ENCODE measurements at regions of chr22 and their contacts with region 1.

Region 1: GRCh38 chr22:40055143-40055883 is 60.6 kb downstream of the FAM83F start:
- DNase-seq: no peak
- ATAC-seq: no peak
- H3K4me3 ChIP-seq: no peak overlapping the region
- H3K27ac ChIP-seq: peak overlapping the region in 1 of 12 donors; percentile 44
- H3K4me1 ChIP-seq: peaks cover 5 to 58% (median 27%) of the 10 kb centered on the region in 12 donors
- H3K27me3 ChIP-seq: no peaks in the 10 kb centered on the region
- CTCF ChIP-seq: no peak
- POLR2A ChIP-seq: no peak

Region 2: DNA sequence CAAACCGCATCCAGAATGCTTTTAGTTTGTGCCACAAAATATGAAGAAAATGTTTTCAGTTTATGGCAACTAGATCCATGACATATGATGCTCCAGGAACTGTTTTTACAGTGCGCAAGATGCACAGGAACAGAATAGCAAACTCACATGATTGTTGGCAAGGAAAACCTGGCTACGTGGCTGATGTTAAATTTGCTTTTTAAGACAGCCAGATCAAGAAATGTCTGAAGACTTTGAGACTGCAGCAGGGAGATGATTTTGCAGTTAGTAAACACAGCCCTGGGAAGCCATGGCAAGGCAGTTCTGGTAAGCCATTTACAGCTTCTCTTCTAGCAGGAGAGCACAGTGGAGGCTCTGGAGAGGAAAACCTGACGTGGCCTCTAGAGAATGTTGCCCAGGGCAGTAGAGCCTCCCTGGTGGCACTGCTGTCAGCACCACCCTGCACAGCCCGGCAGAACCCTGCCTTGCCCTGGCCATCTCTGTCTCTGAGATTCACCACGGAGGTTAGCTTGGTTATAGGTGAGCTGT is 52.6 kb after region 1 on chr22:
- intact Hi-C with region 1: loop called in 2 of 10 experiments (anchors 5 to 10 kb)
- DNase-seq: peak in 4 of 5 donors; percentile 16 to 58 (median 31)
- ATAC-seq: peak; percentile 47 to 93 (median 82)
- H3K4me3 ChIP-seq: peak overlapping the region in 10 of 12 donors; percentile 2 to 54 (median 34)
- H3K27ac ChIP-seq: peak overlapping the region in 8 of 12 donors; percentile 4 to 66 (median 52)
- H3K4me1 ChIP-seq: peaks cover 0 to 44% (median 24%) of the 10 kb centered on the region in 12 donors
- H3K27me3 ChIP-seq: no peaks in the 10 kb centered on the region
- CTCF ChIP-seq: no peak
- POLR2A ChIP-seq: no peak

Region 3: DNA sequence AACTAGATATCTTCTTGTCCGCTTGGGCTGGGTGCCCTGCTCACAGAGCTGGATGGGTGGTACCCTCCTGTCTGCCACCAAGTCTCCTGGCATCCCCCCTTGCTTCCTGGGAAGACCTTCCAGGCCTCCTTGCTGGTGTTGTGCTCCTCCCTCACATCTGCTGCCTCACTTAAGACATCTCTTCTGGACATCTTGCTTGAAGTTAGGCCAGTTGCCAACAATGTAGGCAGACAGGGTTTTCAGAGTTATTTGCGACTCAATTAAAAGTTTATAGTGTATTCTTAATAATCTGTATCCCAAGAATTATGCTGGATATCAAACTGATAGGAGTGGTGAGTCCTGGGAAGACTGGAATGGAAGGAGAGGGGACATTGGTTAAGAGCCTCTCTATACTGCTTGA is 58.4 kb after region 1 on chr22:
- intact Hi-C with region 1: loop called in 3 of 10 experiments (anchors 5 to 10 kb)
- DNase-seq: no peak
- ATAC-seq: peak in 1 of 4 donors; percentile 27
- H3K4me3 ChIP-seq: no peak overlapping the region
- H3K27ac ChIP-seq: no peak overlapping the region
- H3K4me1 ChIP-seq: peaks cover 0 to 50% (median 24%) of the 10 kb centered on the region in 12 donors
- H3K27me3 ChIP-seq: no peaks in the 10 kb centered on the region
- CTCF ChIP-seq: no peak
- POLR2A ChIP-seq: no peak

Region 4: DNA sequence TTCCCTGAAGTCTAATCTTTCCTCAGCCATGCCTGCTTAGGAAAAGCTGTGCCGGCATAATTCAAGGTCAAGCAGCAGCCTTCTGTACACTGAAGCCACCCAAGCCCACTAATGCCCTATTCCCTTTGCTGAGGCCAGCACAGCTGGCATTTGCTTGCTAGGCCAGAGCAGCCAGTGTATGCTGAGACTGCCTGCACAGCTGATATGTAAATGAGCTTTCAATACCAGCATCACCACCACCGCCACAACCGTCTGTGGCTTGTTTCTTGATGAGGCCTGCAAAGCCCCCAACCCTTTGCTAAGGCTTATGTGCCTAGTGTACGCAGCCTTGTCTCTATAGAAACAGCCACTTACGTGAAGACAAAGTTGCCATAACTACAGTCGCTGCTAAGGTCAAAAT is 66.1 kb after region 1 on chr22:
- intact Hi-C with region 1: loop called in 1 of 10 experiments (anchors 5 kb)
- DNase-seq: no peak
- ATAC-seq: no peak
- H3K4me3 ChIP-seq: no peak overlapping the region
- H3K27ac ChIP-seq: peak overlapping the region in 1 of 12 donors; percentile 18
- H3K4me1 ChIP-seq: peaks cover 0 to 38% (median 16%) of the 10 kb centered on the region in 12 donors
- H3K27me3 ChIP-seq: no peaks in the 10 kb centered on the region
- CTCF ChIP-seq: no peak
- POLR2A ChIP-seq: no peak

Region 5: GRCh38 chr22:40156001-40156516 is 100.7 kb after region 1 on chr22:
- intact Hi-C with region 1: loop called in 1 of 10 experiments (anchors 10 kb)
- DNase-seq: peak in 1 of 5 donors; percentile 33
- ATAC-seq: peak in 3 of 4 donors; percentile 60 to 93 (median 66)
- H3K4me3 ChIP-seq: no peak overlapping the region
- H3K27ac ChIP-seq: peak overlapping the region in 1 of 12 donors; percentile 38
- H3K4me1 ChIP-seq: peaks cover 0 to 7% (median 1%) of the 10 kb centered on the region in 12 donors
- H3K27me3 ChIP-seq: no peaks in the 10 kb centered on the region
- CTCF ChIP-seq: peak in 1 of 12 donors; percentile 11
- POLR2A ChIP-seq: no peak

Region 6: DNA sequence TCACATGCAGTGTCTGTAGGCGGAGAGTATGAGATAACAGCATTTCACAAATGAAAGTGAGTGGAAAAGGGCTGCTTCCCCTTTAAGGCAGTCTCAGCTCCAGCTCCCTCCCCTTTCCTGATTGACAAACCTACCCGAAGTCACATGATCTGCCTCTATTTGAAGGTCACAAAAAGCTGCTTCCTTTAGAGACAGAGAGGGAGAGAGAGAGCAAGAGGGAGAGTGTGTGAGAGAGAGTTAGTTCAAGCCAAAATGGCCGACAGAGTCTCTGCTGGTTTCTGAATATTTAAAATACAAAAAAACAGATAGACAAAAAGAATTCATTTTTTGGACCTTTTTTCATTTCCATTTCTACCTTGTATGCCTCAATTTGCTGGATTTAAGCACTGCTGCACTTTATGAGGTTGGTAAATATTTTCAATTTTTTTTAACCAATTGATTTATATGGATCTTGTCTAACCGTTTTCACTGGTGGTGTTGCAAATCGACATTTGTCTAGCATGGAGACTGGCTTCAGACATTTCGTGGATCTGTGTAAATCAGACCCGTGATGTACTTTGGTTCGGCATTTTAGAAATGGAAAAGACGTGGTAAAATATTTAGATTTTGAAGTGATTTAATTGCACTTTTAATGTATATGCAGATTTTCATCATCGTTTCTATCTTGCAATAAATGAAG is 122.6 kb after region 1 on chr22 and contains the start of gene TNRC6B:
- intact Hi-C with region 1: loop called in 1 of 10 experiments (anchors 5 kb)
- DNase-seq: peak in 4 of 5 donors; percentile 69 to 89 (median 82)
- ATAC-seq: peak; percentile 97 to 98 (median 98)
- H3K4me3 ChIP-seq: peak within 1 kb of the TSS; percentile 57 to 88 (median 70)
- H3K27ac ChIP-seq: peak within 1 kb of the TSS; percentile 67 to 96 (median 82)
- H3K4me1 ChIP-seq: peaks cover 11 to 66% (median 56%) of the 10 kb centered on the region in 12 donors
- H3K27me3 ChIP-seq: no peaks in the 10 kb centered on the region
- CTCF ChIP-seq: no peak
- POLR2A ChIP-seq: peak; percentile 85 to 95
- total RNA-seq, gene TNRC6B: 32.7 to 62.4 (median 41.1) TPM

Region 7: DNA sequence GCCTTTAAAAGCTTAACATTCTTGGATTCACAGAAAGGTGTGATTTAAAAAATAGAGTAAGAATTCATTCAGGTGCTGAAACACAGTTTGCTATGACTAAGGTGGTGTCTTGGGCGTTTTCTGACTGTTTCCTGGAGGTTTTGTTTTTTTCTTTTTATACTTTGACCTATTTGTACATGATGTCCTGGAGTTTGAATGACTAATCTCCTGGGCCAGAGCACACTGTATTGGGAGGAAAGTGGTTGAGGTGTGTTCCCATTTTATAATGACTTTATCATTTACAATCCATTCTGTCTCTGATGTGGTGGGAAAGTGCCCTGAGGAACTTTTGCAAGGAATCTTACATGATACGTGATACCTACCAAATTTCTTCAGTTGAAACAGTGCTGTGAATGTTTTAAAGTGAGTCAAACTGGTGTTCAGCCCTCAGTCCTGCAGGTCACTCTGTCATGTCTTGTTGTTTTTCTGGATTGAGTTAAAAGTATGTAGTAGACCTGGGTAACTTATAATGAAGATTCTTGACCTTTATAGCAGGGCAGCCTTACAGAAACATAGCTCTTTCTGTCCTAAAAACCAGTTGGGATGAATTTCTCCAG is 203.2 kb after region 1 on chr22:
- intact Hi-C with region 1: loop called in 2 of 10 experiments (anchors 5 to 10 kb)
- DNase-seq: no peak
- ATAC-seq: peak; percentile 53 to 75 (median 70)
- H3K4me3 ChIP-seq: no peak overlapping the region
- H3K27ac ChIP-seq: peak overlapping the region in 6 of 12 donors; percentile 3 to 82 (median 64)
- H3K4me1 ChIP-seq: peaks cover 0 to 48% (median 19%) of the 10 kb centered on the region in 12 donors
- H3K27me3 ChIP-seq: no peaks in the 10 kb centered on the region
- CTCF ChIP-seq: no peak
- POLR2A ChIP-seq: no peak